ENCODE measurements at regions of chr20 and their contacts with region 1.

Region 1: DNA sequence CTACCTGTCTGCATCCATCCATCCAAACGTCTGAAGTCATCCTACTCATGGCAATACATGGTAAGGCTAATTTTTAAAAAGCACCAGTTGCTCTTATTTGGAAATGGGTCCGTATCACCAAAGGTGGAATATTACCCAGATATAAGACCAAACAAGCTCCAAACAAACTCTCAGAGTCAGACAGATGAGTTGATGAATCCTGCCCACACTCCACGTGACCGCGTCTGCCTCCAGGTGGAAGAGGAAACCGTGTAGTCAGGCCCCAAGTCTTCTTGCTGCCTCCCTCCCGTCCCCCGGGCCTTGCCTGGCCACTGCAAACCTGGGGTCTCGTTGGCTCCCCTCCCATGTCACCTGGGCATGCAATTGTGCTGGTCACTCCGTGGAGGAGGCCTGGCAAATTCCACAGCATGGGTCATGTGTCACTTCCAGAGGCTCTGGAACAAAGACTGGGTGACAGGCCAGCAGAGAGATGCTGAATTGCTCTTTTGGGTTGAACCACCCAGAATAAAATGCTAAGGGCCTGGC is 31.8 kb downstream of the CTCFL start:
- DNase-seq: no peak
- H3K4me3 ChIP-seq: no peak overlapping the region
- CTCF ChIP-seq: no peak

Region 2: DNA sequence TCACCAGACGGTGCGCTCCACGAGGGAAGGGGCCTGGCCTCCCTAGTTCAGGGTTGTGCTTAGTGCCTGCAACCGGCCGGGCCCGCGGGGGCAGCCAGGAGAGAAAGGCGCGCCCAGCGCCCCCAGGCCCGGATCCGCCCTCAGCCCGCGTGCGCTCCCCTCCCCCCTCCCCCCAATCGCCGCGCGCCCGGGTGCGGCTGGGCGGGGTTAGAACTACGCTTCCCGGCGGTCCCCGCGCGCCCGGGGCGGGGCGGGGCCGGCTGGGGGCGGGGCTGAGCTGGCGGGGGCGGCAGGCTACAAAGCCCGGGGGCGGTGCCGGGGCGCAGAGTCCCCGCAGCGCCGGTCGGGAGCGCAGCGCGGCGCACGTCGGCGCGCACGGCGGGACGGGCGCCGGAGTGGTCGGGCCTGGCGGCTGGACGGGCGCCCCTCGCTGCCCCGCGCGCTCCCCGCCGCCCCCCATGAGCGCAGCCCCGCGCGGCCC is 102.0 kb before region 1 on chr20 and contains the start of gene RBM38:
- CTCF ChIA-PET with region 1: interaction called, 49 read pairs
- POLR2A ChIA-PET with region 1: no interaction called
- DNase-seq: no peak
- H3K4me3 ChIP-seq: peak within 1 kb of the TSS; percentile 68
- CTCF ChIP-seq: no peak

Region 3: DNA sequence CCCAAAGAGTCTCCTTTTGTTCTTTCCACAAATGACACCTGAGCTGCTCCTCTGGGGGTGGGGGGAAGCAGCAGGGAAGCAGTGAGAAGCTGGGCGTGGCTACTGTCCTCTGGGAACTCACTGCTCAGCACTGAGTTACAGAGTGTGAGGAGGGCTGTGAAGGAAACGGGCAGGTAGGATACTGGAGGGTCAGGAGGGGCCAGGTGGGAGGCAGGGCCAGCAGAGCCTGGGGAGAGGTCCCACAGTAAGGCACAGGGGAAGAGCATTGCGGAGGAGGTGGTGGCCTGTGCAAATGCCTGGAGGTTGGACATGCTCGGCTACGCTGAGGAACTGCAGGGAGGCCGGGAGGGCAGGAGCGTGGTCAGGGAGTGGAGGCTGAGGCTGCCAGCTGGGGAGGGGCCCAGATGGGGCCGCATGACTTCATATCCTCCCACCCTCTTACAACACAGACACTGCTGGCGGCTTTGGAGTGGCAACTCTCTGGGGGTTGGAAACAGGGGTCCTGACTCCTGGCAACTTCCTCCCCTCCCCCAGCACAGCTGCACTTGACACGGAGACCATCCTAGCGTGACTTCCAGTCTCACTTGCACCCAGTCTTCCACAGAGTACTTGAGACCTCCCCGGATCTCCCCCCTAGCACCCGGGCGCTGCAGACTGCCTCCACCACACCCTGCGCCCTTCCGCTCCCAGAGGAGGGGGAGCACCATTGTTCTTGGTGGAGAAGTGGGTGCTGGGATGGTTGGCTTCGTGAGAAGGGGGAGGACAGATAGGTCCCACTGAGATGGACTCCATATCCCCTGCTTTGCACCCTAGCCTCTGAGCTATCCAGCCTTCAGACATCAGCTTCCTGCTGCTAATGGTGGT is 67.8 kb before region 1 on chr20:
- CTCF ChIA-PET with region 1: no interaction called
- POLR2A ChIA-PET with region 1: no interaction called
- DNase-seq: no peak
- H3K4me3 ChIP-seq: no peak overlapping the region
- CTCF ChIP-seq: no peak

Region 4: DNA sequence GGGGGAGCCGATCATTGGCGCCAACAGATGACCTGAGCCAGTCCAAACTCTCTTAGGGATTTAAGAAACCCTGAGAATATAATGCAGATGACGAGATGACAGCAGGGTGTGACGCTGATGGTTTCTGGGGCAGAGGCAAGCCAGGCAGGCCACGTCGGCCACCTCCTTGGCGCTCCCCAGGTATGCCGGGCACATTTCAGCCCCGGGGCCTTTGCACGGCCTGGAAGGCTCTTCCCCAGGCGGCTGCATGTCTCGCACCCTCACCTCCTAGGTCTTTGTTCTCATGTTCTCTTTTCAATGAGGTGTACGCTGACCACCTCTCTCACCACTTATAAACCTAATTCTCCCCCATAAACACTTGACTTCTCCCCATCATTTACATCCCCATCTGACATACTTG is 37.0 kb before region 1 on chr20:
- CTCF ChIA-PET with region 1: no interaction called
- POLR2A ChIA-PET with region 1: no interaction called
- DNase-seq: no peak
- H3K4me3 ChIP-seq: no peak overlapping the region
- CTCF ChIP-seq: no peak

Region 5: GRCh38 chr20:57618091-57618763 is 125.1 kb after region 1 on chr20:
- CTCF ChIA-PET with region 1: no interaction called
- POLR2A ChIA-PET with region 1: no interaction called
- DNase-seq: no peak
- H3K4me3 ChIP-seq: no peak overlapping the region
- CTCF ChIP-seq: no peak